Ascending aorta (tissue), 2 donors: ENCODE measurements at regions of chr16 and their contacts with region 1.

Region 1: DNA sequence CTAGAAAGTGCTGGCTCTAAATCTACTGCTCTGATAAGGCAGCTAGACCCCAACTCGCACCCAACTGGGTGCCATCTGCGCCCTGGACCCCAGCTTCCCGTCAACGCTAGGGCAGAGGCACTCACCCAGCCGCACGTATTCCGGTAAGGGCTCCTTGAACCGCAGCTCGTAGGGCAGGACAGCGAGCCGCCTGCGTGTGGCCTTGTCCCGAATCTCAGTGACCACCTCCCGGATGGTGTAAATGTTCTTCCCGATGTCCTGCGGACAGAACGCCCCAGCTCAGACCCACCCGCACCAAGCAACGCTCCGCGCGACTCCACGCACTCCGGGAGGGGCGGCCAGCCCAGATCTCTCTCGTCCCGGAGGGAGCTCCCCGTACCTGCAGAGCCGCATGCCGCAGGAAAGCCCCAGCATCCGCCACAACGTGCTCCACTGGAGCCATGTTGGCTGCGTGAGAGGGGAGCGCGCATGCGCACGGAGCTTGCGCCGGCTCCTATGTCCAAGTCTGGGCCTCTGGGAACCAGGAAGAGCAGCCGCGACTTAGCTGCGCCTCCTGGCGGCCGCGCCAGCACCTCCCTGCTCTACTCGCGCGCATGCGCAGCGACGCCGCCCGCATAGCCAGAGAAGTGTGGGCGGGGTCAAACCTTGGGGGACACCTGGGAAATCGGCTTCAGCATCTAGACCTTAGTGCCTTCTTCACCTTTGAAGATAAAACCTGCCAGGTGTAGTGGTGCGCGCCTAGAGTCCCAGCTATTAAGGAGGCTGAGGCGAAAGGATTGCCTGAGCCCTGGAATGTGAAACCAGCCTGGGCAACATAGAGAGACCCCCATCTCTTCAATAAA is at the start of gene NOB1:
- DNase-seq: peak; percentile 81 to 97
- H3K4me3 ChIP-seq: peak within 1 kb of the TSS; percentile 65 to 68
- H3K27ac ChIP-seq: peak within 1 kb of the TSS; percentile 15 to 59
- H3K4me1 ChIP-seq: peaks cover 5 to 19% of the 10 kb centered on the region in 2 donors
- H3K27me3 ChIP-seq: no peaks in the 10 kb centered on the region
- CTCF ChIP-seq: peak; percentile 93 to 100 (median 97)
- total RNA-seq, gene NOB1: 20.2 TPM

Region 2: DNA sequence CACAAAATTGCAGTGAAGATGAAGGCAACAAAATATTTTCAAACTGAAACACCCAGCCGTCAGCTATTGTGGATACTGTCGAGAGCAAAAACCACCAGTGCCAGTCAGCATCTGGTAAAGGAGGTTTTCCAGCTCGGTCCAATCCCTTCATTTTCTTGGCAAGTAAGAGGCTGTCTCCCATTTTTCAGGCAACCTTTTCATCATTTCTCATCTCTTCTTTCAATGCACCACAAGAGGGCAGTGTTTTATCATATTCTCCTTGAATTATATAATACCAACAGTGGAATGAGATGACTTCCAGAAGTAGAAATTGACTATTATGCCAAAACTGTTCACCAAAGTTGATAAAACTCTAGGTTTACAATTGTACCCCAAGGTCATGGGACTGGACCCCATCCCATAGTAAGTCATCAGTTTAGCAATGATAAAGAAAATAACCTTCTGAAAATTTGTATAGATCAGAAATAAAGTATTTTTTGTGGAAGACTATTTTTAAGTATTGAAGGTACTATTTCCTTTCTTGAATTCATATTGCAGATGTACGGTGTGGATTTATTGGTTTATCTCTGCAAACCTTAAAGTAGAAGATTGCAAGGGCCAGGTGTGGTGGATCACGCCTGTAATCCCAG is 45.1 kb before region 1 on chr16:
- intact Hi-C with region 1: loop called (anchors 1 kb)
- DNase-seq: no peak
- H3K4me3 ChIP-seq: no peak overlapping the region
- H3K27ac ChIP-seq: peak overlapping the region; percentile 22 to 61
- H3K4me1 ChIP-seq: peaks cover 0 to 15% of the 10 kb centered on the region in 2 donors
- H3K27me3 ChIP-seq: no peaks in the 10 kb centered on the region
- CTCF ChIP-seq: peak; percentile 48 to 72 (median 66)

Region 3: DNA sequence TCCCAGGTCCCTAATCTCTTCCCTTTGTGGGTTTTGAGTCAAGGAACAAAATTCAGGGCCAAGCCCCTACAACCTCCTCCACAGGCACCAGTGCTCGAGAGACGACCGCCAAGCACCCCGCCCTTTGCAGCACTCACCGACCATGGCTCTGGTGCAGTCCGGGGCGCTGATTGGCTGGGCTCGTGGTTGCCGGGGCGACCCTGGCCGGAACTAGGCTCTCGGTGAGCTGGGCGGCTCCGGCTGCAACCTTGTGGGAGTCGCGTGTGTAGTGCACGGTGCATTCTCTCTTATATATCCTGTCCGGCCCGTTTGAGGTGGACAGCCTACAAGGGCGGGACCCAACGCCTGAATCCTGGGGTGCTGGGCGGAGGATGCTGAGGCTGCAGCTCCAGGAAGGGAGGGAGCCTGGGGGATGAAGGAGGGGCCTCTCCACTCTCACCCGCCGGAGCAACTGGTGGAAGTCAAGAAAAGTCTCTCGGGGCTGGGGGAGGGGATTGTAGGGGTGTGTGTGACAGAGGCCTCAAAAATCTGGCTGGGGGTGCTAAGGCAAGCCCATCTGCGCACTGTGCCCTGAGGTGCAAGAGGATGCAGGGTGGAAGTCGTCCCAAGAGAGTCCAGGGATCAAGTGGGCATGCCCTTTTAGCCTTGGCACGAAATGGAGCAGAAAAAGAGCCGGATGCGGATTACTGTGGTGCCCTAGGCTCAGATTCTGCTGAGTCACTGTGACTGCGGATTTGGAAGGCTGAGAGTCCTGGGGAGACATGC is 28.2 kb before region 1 on chr16 and contains the start of gene NQO1:
- intact Hi-C with region 1: loop called (anchors 1 kb)
- DNase-seq: peak; percentile 79 to 95
- H3K4me3 ChIP-seq: peak within 1 kb of the TSS; percentile 58 to 68
- H3K27ac ChIP-seq: peak within 1 kb of the TSS; percentile 79 to 81
- H3K4me1 ChIP-seq: peaks cover 9 to 20% of the 10 kb centered on the region in 2 donors
- H3K27me3 ChIP-seq: no peaks in the 10 kb centered on the region
- CTCF ChIP-seq: no peak
- total RNA-seq, gene NQO1: 58.6 TPM